Transverse colon (tissue), 4 donors: ENCODE measurements at regions of chr10 and their contacts with region 1.

Region 1: GRCh38 chr10:15262036-15262713 is 93.7 kb upstream of the NMT2 start:
- DNase-seq: peak; percentile 25
- H3K4me3 ChIP-seq: no peak overlapping the region
- H3K27ac ChIP-seq: no peak overlapping the region
- H3K4me1 ChIP-seq: no peaks in the 10 kb centered on the region
- H3K27me3 ChIP-seq: no peaks in the 10 kb centered on the region
- CTCF ChIP-seq: peak; percentile 33 to 60 (median 38)
- EP300 ChIP-seq: no peak
- POLR2A ChIP-seq: no peak

Region 2: GRCh38 chr10:15141136-15142054 is 120.8 kb before region 1 on chr10:
- in situ Hi-C with region 1: no loop called
- intact Hi-C with region 1: no loop called
- DNase-seq: no peak
- H3K4me3 ChIP-seq: no peak overlapping the region
- H3K27ac ChIP-seq: no peak overlapping the region
- H3K4me1 ChIP-seq: no peaks in the 10 kb centered on the region
- H3K27me3 ChIP-seq: no peaks in the 10 kb centered on the region
- CTCF ChIP-seq: no peak
- EP300 ChIP-seq: no peak
- POLR2A ChIP-seq: no peak

Region 3: DNA sequence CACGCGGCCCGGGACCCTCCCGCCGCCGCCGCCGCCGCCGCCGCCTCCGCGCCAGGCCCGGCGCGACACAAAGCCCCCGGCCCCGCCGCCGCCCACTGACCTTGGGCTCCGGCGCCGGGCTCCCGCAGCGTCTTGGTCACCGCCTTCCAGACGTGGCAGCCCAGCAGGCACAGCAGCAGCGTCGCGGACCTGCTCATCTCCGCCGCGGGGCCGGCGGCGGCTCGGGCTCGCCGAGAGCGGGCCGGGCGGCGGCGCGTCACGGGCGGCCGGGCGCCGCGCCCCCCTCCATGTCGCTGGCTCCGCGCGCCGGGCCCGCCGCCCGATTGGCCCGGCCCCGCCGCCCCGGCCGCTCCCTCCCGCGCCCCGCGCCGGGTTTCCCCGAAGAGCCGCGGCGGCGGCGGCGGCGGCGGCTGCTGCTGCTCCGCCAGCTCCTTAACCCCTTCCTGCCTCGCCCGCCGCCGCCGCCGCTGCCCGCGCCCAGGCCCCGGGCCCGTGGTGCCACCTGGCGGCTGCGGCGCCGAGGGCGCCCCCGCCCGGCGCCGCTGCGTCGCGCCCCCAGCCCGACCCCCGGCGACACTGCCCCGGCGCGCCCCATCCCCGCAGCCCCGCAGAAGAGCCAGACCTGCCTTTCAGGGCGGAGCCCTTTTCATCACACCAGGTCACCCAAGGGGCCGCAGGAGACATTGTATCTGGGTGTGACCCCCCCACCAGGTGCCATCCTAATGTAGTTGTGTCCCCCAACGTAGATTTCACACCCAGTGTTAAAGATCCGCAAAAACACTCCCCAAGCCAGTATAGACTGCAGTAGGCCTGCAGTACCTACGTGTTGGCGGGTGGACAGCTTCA is 108.9 kb after region 1 on chr10 and contains the start of gene FAM171A1:
- in situ Hi-C with region 1: loop called in 2 of 4 experiments (anchors 10 to 25 kb)
- intact Hi-C with region 1: no loop called
- DNase-seq: peak; percentile 68
- H3K4me3 ChIP-seq: peak within 1 kb of the TSS; percentile 72 to 95 (median 82)
- H3K27ac ChIP-seq: peak within 1 kb of the TSS; percentile 65 to 87 (median 83)
- H3K4me1 ChIP-seq: peaks cover 0 to 22% (median 15%) of the 10 kb centered on the region in 4 donors
- H3K27me3 ChIP-seq: no peaks in the 10 kb centered on the region
- CTCF ChIP-seq: peak in 3 of 5 experiments; percentile 10 to 34 (median 32)
- EP300 ChIP-seq: no peak
- POLR2A ChIP-seq: no peak
- total RNA-seq, gene FAM171A1: 29.2 to 42.2 (median 38.2) TPM